GM13976 (cell line): ENCODE measurements at regions of chr17 and their contacts with region 1.

Region 1: GRCh38 chr17:45828628-45829027 is 16.1 kb upstream of the SPPL2C start:
- DNase-seq: no peak
- CTCF ChIP-seq: no peak

Region 2: DNA sequence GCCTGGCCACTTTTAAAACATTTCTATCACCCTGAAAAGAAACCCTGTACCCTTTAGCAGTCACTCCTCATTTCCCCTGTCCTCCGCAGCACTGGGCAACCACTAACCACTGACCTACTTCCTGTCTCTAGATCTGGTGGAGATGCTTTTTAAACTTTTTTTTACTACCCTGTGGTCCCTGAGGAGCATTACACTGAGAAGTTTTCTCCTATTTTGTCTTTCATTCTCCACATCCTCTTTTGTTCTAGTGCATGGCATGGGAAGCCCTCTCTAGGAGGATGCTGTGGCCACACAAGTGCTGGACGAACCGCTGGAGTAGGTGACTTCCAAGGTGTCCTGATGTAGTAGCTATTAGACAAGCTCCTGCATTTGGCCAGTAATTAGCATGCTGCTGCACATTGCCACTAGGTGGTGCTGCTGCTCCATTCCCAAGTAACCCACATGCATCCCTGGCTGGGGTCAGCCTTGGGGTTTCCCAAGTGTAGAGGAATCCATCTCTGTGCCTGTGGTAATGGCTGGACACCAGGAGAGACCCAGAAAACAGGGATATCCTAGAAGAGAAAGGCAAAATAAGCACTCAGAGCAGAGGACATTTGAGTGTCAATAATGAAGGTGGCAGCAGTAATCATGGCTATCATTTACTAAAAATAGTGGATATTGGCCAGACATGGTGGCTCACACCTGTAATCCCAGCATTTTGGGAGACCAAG is 188.3 kb before region 1 on chr17:
- in situ Hi-C with region 1: loop called (anchors 10 kb)
- DNase-seq: peak; percentile 76
- CTCF ChIP-seq: peak; percentile 94

Region 3: DNA sequence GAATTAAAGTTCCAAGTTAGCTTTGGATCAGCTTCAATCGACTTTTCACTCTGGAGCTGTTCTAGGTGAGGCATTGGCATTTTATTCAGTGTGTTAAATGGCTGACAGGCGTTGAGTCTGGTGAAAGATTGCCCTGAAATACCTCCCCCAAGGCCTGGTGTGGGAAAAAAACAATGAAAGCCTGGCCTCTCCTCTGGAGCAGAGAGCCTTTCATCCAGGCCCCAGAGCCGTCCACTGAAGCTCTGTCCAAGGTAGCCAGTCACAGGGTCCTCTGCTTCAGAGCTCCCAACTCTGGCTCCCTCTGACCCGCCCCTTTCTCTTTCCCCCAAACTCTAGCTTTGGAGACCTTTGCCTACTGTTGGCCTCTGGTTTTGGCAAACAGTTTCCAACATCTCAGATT is 168.2 kb before region 1 on chr17:
- in situ Hi-C with region 1: no loop called
- DNase-seq: no peak
- CTCF ChIP-seq: no peak

Region 4: DNA sequence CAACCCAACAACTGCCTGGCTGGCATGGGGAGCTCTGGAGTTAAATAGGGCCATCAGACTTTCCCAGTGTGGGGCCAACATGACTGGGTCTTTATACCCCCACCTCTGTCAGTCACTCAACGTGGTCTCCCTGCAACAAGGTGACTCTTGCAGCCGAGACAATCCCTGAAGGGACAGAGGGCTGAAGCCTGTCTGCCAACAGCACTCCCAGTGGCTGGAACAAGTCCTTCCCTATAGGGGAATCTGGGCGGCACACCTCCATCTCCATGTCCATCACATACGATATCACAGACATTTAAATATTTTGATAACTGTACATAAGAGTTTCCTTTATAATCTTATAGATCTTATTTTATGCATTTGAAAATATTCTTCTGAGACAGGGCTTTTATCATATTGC is 61.0 kb after region 1 on chr17:
- in situ Hi-C with region 1: loop called (anchors 10 kb)
- DNase-seq: no peak
- CTCF ChIP-seq: no peak